ENCODE measurements at regions of chr20 and their contacts with region 1.

Region 1: DNA sequence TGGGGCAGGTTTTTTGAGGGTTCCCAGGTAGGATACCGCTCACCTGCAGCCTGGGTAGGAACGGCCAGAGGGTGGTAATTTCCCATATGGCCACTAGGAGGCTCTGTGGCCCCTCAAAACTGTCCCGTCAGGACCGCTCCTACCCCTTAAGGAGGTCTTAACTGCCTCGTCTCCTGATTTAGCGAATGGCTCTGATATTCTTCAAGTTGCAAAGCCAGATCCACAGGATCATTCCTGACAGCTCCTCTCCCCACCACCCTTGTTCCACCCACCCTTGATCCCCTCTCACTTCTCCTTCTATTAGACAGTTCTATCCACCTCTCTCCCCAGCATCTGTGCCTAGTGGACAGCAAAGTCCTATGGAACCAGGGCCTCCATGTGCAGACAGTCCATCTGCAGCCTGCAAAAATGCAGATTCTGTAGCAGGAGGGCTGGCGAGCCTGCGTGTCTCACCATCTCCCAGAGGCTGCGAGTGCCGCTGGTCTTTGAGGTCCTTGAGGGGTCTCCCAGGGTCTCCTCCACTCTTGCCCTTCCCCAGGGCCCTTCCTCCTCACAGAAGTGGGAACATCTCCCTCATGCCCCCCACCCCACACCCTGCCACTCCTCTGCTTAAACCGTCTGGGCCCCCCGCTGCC is 34.3 kb upstream of the ZBP1 start:
- DNase-seq: peak; percentile 81
- H3K4me3 ChIP-seq: no peak overlapping the region
- H3K27ac ChIP-seq: no peak overlapping the region
- H3K4me1 ChIP-seq: peaks cover 0 to 38% (median 19%) of the 10 kb centered on the region in 6 donors
- H3K27me3 ChIP-seq: no peaks in the 10 kb centered on the region
- CTCF ChIP-seq: peak; percentile 78 to 94 (median 91)
- POLR2A ChIP-seq: no peak

Region 2: GRCh38 chr20:58087193-58087858 is 432.8 kb after region 1 on chr20:
- intact Hi-C with region 1: loop called (anchors 10 kb)
- DNase-seq: no peak
- H3K4me3 ChIP-seq: no peak overlapping the region
- H3K27ac ChIP-seq: no peak overlapping the region
- H3K4me1 ChIP-seq: no peaks in the 10 kb centered on the region
- H3K27me3 ChIP-seq: no peaks in the 10 kb centered on the region
- CTCF ChIP-seq: peak; percentile 21 to 78 (median 68)
- POLR2A ChIP-seq: no peak

Region 3: DNA sequence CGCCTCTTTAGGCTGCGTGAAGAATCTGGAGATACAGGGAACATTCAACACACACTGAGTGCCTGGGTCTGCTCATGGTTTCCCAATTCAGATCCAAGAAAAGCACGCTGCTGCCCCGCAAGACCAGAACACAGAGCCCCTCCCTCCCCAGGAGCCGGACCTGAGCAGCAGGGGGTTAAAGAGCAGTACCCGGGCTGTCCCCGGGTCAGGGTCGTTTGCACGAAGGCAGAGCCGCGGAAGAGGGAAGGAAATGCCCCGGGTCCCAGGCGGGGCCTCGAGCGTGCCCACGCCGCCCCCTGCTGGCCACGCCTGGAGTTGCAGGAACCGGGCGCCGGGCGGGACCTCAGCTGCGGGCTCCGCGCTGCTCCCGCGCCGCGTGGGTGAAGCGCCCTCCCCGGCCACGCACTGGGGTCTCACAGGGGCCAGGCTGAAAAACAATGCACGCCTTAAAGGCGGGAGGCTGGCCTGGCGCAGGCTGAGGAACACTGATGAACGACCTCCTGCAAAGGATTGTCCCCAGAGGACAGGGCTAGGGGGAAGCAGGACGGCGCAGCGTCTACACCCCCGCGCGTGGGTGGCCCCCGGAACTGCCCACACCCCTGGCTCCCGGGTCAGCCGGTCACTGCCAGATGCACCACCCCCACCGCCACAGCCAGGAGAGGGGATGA is 525.1 kb after region 1 on chr20:
- intact Hi-C with region 1: loop called (anchors 5 kb)
- DNase-seq: peak; percentile 91
- H3K4me3 ChIP-seq: peak overlapping the region in 5 of 8 donors; percentile 11 to 58 (median 13)
- H3K27ac ChIP-seq: no peak overlapping the region
- H3K4me1 ChIP-seq: peaks cover 5 to 23% (median 13%) of the 10 kb centered on the region in 6 donors
- H3K27me3 ChIP-seq: peaks cover 0 to 65% (median 7%) of the 10 kb centered on the region in 7 donors
- CTCF ChIP-seq: peak; percentile 83 to 100 (median 96)
- POLR2A ChIP-seq: no peak

Measured in spleen (tissue), 13 donors.